ENCODE measurements at regions of chr2 and their contacts with region 1.

Region 1: DNA sequence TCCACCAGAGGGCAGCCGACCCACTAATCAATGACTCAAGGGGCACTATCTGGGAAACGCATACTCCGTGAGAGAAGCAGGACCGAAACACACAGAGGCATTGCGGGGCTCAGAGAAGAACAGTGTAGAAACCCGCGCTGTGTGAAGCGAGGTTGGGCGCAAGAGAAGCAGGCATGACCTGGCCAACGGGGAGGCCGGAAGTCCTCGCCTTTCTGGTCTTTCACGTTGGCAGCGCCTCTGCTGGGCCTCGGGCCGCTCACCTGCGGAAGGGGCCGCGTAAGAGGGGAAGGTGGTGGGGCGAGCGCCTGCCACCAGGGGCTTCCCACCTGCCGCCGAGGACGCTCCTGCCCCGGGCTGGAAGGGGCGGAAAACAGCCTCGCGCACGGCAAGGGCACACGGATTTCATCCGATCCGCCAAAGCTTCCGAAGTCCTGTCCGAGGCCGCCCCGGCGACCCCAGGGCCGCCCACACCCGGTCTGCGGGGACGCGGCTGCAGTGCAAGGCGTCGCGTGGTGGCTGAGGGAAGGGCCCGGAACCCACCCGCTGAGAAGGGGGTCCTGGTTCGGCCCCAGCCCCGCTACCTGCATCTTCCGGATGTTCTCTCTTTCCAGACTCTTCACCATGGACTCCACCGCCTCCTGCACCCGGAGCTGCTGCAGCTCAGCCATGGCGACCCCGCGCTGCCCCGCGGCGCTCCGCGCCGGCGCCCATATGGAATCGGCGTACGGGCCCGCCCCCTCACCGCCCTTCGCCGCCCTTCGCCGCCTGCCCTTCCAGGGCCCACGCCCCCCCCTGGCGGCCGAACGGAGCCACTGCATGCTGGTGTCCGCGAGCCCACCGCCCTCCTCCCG is at the start of gene FAM136A:
- DNase-seq: peak; percentile 80
- H3K4me3 ChIP-seq: peak within 1 kb of the TSS; percentile 52 to 90 (median 62)
- H3K27ac ChIP-seq: peak within 1 kb of the TSS; percentile 6
- H3K4me1 ChIP-seq: peaks cover 5% of the 10 kb centered on the region
- H3K27me3 ChIP-seq: no peaks in the 10 kb centered on the region
- CTCF ChIP-seq: peak; percentile 70 to 97
- POLR2A ChIP-seq: peak; percentile 93
- total RNA-seq, gene FAM136A: 42.4 and 45.7 TPM in 2 replicates

Region 2: GRCh38 chr2:70340921-70341765 is 39.6 kb after region 1 on chr2:
- CTCF ChIA-PET with region 1: interaction called, 19 read pairs
- POLR2A ChIA-PET with region 1: no interaction called
- dilution Hi-C with region 1: no loop called
- intact Hi-C with region 1: loop called (anchors 1 kb)
- DNase-seq: peak; percentile 55
- H3K4me3 ChIP-seq: no peak overlapping the region
- H3K27ac ChIP-seq: no peak overlapping the region
- H3K4me1 ChIP-seq: no peaks in the 10 kb centered on the region
- H3K27me3 ChIP-seq: no peaks in the 10 kb centered on the region
- CTCF ChIP-seq: peak; percentile 71 to 82
- POLR2A ChIP-seq: no peak

Region 3: GRCh38 chr2:70616168-70616694 is 314.7 kb after region 1 on chr2:
- CTCF ChIA-PET with region 1: interaction called, 223 read pairs
- POLR2A ChIA-PET with region 1: no interaction called
- dilution Hi-C with region 1: no loop called
- intact Hi-C with region 1: loop called (anchors 1 kb)
- DNase-seq: no peak
- H3K4me3 ChIP-seq: no peak overlapping the region
- H3K27ac ChIP-seq: no peak overlapping the region
- H3K4me1 ChIP-seq: no peaks in the 10 kb centered on the region
- H3K27me3 ChIP-seq: peaks cover 8 to 11% of the 10 kb centered on the region in 2 experiments
- CTCF ChIP-seq: no peak
- POLR2A ChIP-seq: no peak

Region 4: DNA sequence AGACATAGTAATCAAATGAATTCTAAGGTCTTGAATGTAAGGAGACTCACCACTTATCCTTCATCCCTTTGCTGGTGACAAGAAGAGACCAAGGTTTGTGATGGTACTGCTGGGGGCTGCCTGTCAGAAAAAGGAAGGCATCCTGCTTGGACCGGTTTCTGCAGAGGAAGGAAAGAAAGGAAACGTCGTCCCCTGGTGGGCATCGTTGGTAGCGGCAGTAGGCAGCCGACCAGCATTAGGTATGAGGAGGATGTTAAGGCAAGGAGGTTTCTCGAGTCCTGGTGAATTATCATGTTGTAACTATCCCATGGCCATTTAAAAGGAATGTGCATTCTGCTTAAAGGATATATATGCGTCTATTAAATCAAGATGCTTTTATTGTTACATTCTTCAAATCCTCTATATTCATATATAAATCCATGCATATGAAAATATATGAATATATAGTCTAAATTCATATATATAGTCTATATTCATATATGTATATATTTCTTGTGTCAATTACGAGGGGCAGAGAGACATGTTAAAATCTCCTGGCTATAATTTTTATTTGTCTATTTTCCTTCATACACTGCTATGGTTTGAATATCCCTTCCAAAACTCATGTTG is 346.4 kb after region 1 on chr2:
- CTCF ChIA-PET with region 1: interaction called, 201 read pairs
- POLR2A ChIA-PET with region 1: no interaction called
- dilution Hi-C with region 1: no loop called
- intact Hi-C with region 1: loop called (anchors 1 kb)
- DNase-seq: peak; percentile 77
- H3K4me3 ChIP-seq: no peak overlapping the region
- H3K27ac ChIP-seq: no peak overlapping the region
- H3K4me1 ChIP-seq: no peaks in the 10 kb centered on the region
- H3K27me3 ChIP-seq: peaks cover 0 to 9% of the 10 kb centered on the region in 2 experiments
- CTCF ChIP-seq: peak; percentile 95 to 98
- POLR2A ChIP-seq: no peak

Region 5: GRCh38 chr2:70696142-70696541 is 394.6 kb after region 1 on chr2:
- CTCF ChIA-PET with region 1: no interaction called
- POLR2A ChIA-PET with region 1: no interaction called
- dilution Hi-C with region 1: no loop called
- intact Hi-C with region 1: no loop called
- DNase-seq: no peak
- H3K4me3 ChIP-seq: no peak overlapping the region
- H3K27ac ChIP-seq: no peak overlapping the region
- H3K4me1 ChIP-seq: no peaks in the 10 kb centered on the region
- H3K27me3 ChIP-seq: peaks cover 0 to 3% of the 10 kb centered on the region in 2 experiments
- CTCF ChIP-seq: no peak
- POLR2A ChIP-seq: no peak

Region 6: GRCh38 chr2:70789304-70790135 is 488.0 kb after region 1 on chr2:
- CTCF ChIA-PET with region 1: interaction called, 24 read pairs
- POLR2A ChIA-PET with region 1: no interaction called
- dilution Hi-C with region 1: no loop called
- intact Hi-C with region 1: loop called (anchors 2 kb)
- DNase-seq: peak; percentile 77
- H3K4me3 ChIP-seq: no peak overlapping the region
- H3K27ac ChIP-seq: no peak overlapping the region
- H3K4me1 ChIP-seq: peaks cover 4% of the 10 kb centered on the region
- H3K27me3 ChIP-seq: peaks cover 45 to 69% of the 10 kb centered on the region in 2 experiments
- CTCF ChIP-seq: peak; percentile 70 to 80
- POLR2A ChIP-seq: no peak

Region 7: GRCh38 chr2:70871398-70872211 is 570.0 kb after region 1 on chr2:
- CTCF ChIA-PET with region 1: interaction called, 13 read pairs
- POLR2A ChIA-PET with region 1: no interaction called
- dilution Hi-C with region 1: no loop called
- intact Hi-C with region 1: no loop called
- DNase-seq: peak; percentile 77
- H3K4me3 ChIP-seq: no peak overlapping the region
- H3K27ac ChIP-seq: no peak overlapping the region
- H3K4me1 ChIP-seq: peaks cover 2% of the 10 kb centered on the region
- H3K27me3 ChIP-seq: peaks cover 15 to 27% of the 10 kb centered on the region in 2 experiments
- CTCF ChIP-seq: peak; percentile 95
- POLR2A ChIP-seq: no peak